Activated CD8-positive, alpha-beta T cell treated with anti-CD3 and anti-CD28 coated beads for 36 hours (primary cell): ENCODE measurements at regions of chr5 and their contacts with region 1.

Region 1: GRCh38 chr5:43484106-43484849 is 613 bp upstream of the TMEM267 start:
- DNase-seq: peak; percentile 93
- ATAC-seq: peak; percentile 71
- H3K4me3 Mint-ChIP-seq: peak overlapping the region; percentile 91
- H3K27ac Mint-ChIP-seq: peak overlapping the region; percentile 100
- H3K4me1 Mint-ChIP-seq: peaks cover 42% of the 10 kb centered on the region
- H3K27me3 Mint-ChIP-seq: no peaks in the 10 kb centered on the region
- CTCF ChIP-seq: peak; percentile 67

Region 2: GRCh38 chr5:43040287-43041098 is 443.8 kb before region 1 on chr5 and contains the start of gene ANXA2R:
- CTCF ChIA-PET with region 1: interaction called, 14 read pairs
- POLR2A ChIA-PET with region 1: interaction called, 4 read pairs
- intact Hi-C with region 1: no loop called
- DNase-seq: peak; percentile 97
- ATAC-seq: peak; percentile 67
- H3K4me3 Mint-ChIP-seq: peak within 1 kb of the TSS; percentile 81
- H3K27ac Mint-ChIP-seq: peak within 1 kb of the TSS; percentile 98
- H3K4me1 Mint-ChIP-seq: peaks cover 38% of the 10 kb centered on the region
- H3K27me3 Mint-ChIP-seq: no peaks in the 10 kb centered on the region
- CTCF ChIP-seq: peak; percentile 76
- total RNA-seq, gene ANXA2R: 8.0 to 10.4 TPM

Region 3: GRCh38 chr5:43396762-43397304 is 87.4 kb before region 1 on chr5:
- CTCF ChIA-PET with region 1: interaction called, 8 read pairs
- POLR2A ChIA-PET with region 1: interaction called, 6 read pairs
- intact Hi-C with region 1: loop called (anchors 5 kb)
- DNase-seq: peak; percentile 80
- ATAC-seq: peak; percentile 97
- H3K4me3 Mint-ChIP-seq: peak overlapping the region; percentile 89
- H3K27ac Mint-ChIP-seq: peak overlapping the region; percentile 95
- H3K4me1 Mint-ChIP-seq: peaks cover 29% of the 10 kb centered on the region
- H3K27me3 Mint-ChIP-seq: no peaks in the 10 kb centered on the region
- CTCF ChIP-seq: no peak

Region 4: DNA sequence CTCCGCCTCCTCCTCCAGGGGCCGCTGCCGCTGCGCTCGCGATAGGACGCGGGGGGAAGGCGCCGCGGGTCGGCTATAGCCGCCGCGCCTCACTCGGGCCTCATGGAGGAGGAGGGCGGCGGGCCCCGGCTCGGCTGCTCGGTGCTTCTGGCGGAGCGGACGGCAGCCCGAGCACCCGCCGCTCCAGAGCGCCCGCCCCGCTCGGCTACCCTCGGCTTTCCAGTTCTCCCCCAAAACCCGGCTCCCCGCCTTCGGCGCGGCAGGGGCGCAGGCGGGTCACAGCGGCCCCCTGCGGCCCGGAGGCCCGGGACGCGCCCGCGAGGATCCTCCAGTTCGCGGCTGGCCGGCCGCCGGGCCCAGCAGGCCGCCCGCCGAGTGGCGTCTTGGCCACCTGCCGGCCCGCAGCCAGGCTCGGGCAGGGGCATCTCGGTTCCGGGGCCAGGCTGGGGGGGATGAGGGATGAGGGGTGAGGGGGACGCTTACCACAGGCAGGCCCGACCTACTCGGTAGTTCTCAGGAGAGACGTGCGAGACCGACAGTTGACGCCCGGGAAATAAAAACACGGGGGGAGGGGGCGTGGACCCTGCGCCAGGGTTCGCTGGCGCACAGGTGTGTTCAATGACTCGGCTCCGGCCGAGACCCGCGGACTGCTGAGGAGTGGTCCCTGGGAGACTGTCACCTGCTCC is 72.7 kb after region 1 on chr5 and contains the start of gene PAIP1:
- CTCF ChIA-PET with region 1: interaction called, 8 read pairs
- POLR2A ChIA-PET with region 1: interaction called, 8 read pairs
- intact Hi-C with region 1: loop called (anchors 2 kb)
- DNase-seq: peak; percentile 83
- ATAC-seq: peak; percentile 87
- H3K4me3 Mint-ChIP-seq: peak within 1 kb of the TSS; percentile 87
- H3K27ac Mint-ChIP-seq: peak within 1 kb of the TSS; percentile 93
- H3K4me1 Mint-ChIP-seq: peaks cover 17% of the 10 kb centered on the region
- H3K27me3 Mint-ChIP-seq: peaks cover 1% of the 10 kb centered on the region
- CTCF ChIP-seq: peak; percentile 69
- total RNA-seq, gene PAIP1: 43.6 to 44.6 TPM